Posterior cingulate gyrus (tissue), 11 donors: ENCODE measurements at regions of chr9 and their contacts with region 1.

Region 1: DNA sequence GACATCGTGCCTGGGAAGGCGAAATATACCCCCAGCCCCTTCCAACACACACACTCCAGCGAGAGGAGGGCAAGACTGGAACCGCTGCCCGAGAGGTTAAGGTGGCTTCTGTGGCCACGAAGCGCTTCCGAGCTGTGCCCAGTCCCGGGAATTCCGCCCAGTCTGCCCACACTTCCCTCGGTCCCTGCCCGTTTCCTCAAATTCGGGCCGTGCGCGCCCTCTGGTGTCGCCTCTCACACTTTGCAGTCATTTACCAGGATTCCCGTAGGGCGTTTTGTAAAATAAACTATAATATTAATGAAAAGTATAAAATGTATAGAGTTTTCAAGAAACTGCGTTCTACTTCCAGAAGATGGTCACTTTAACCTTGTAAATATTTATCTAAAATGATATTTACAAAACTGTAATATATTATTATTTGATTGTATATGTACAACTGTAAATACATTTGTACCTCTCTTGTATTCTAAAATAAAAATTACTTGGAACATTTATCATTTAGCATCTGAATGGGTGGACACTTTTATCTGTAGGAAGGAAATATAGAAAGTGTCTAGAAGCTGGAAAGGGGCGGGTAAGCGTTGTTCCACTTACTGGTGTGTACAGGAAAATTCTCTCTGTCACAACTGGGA is 11.0 kb upstream of the EXOSC2 start:
- DNase-seq: peak; percentile 78 to 97 (median 86)

Region 2: GRCh38 chr9:130461218-130461630 is 221.4 kb before region 1 on chr9:
- intact Hi-C with region 1: loop called (anchors 1 kb)
- DNase-seq: peak in 9 of 10 donors; percentile 29 to 94 (median 71)

Region 3: GRCh38 chr9:130578865-130579737 is 103.5 kb before region 1 on chr9 and contains the start of gene FUBP3:
- intact Hi-C with region 1: loop called (anchors 10 kb)
- DNase-seq: peak; percentile 93 to 99 (median 97)

Region 4: GRCh38 chr9:130870491-130871381 is 188.1 kb after region 1 on chr9:
- intact Hi-C with region 1: no loop called
- DNase-seq: peak in 1 of 10 donors; percentile 49